ENCODE measurements at regions of chr11 and their contacts with region 1.

Region 1: DNA sequence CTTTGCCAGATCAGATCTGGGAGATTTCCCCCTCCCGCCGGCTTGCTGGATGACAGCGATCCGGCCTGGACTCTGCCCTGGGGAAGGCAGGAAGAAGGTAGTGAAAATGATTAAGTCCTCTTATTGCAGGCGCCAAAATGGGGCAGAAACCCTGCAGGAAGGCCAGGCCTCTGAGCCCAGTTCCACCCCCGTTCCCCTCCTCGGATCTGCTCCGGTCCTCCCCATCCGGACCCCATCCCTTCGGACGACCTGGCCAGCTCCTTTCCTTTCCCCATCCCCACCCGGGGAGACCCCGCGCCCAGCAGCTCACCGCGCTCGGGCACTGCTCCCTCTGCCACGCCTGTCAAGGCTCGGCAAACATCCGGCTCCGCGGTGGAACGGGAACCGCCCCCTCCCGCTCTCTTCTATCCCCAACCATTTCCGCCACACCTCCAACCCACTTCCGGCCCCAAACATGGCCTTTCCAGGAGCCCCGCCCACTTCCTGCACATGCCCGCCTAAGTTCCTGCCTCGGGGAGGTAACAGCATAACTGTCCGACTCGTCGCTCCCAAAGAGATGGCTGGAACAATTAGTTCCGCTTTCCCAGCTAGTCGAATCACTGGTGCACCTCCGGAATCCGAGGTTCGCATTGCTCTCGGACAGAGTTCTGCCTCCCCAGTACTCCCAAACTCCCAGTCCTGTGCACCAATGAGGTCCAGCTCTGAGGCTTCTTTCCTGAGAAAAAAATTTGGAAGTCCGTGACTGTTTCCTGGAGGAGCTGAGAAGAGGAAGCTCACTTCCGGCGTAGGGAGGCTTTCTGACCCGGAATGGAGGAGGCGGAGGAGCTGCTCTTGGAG is at the starts of genes ARHGAP1 and ZNF408:
- DNase-seq: peak; percentile 99
- H3K4me3 ChIP-seq: peak within 1 kb of the TSS; percentile 70 to 89
- H3K27ac ChIP-seq: peak within 1 kb of the TSS; percentile 90 to 92
- H3K4me1 ChIP-seq: no peaks in the 10 kb centered on the region
- H3K27me3 ChIP-seq: no peaks in the 10 kb centered on the region
- CTCF ChIP-seq: no peak
- POLR2A ChIP-seq: peak; percentile 94
- total RNA-seq, gene ARHGAP1: 73.2 to 94.5 TPM
- total RNA-seq, gene ZNF408: 9.9 to 17.8 TPM

Region 2: GRCh38 chr11:46616998-46617675 is 83.3 kb before region 1 on chr11 and contains the starts of genes ATG13 and HARBI1:
- intact Hi-C with region 1: loop called (anchors 2 kb)
- DNase-seq: peak; percentile 81
- H3K4me3 ChIP-seq: peak within 1 kb of the TSS; percentile 84 to 96
- H3K27ac ChIP-seq: peak within 1 kb of the TSS; percentile 92 to 95
- H3K4me1 ChIP-seq: no peaks in the 10 kb centered on the region
- H3K27me3 ChIP-seq: no peaks in the 10 kb centered on the region
- CTCF ChIP-seq: no peak
- POLR2A ChIP-seq: peak; percentile 58
- total RNA-seq, gene ATG13: 54.3 to 172 TPM
- total RNA-seq, gene HARBI1: 3.1 to 4.1 TPM

Region 3: GRCh38 chr11:46649180-46649738 is 51.2 kb before region 1 on chr11:
- intact Hi-C with region 1: loop called (anchors 5 kb)
- DNase-seq: peak; percentile 39
- H3K4me3 ChIP-seq: no peak overlapping the region
- H3K27ac ChIP-seq: peak overlapping the region; percentile 23 to 47
- H3K4me1 ChIP-seq: peaks cover 6% of the 10 kb centered on the region
- H3K27me3 ChIP-seq: no peaks in the 10 kb centered on the region
- CTCF ChIP-seq: no peak
- POLR2A ChIP-seq: no peak

Region 4: GRCh38 chr11:46826310-46827044 is 126.0 kb after region 1 on chr11:
- intact Hi-C with region 1: no loop called
- DNase-seq: peak; percentile 72
- H3K4me3 ChIP-seq: peak overlapping the region; percentile 39
- H3K27ac ChIP-seq: peak overlapping the region; percentile 51 to 68
- H3K4me1 ChIP-seq: no peaks in the 10 kb centered on the region
- H3K27me3 ChIP-seq: no peaks in the 10 kb centered on the region
- CTCF ChIP-seq: peak in 2 of 4 experiments; percentile 19 to 36
- POLR2A ChIP-seq: no peak

Measured in prostate gland (tissue), 2 donors.